H1 (cell line): ENCODE measurements at regions of chr5 and their contacts with region 1.

Region 1: GRCh38 chr5:154087257-154087656 is 48.5 kb downstream of the MFAP3 start:
- DNase-seq: no peak
- H3K4me3 ChIP-seq: no peak overlapping the region
- H3K27ac ChIP-seq: no peak overlapping the region
- H3K4me1 ChIP-seq: peaks cover 0 to 6% (median under 1%) of the 10 kb centered on the region in 4 experiments; a peak in 2 of 7 replicates
- H3K27me3 ChIP-seq: no peaks in the 10 kb centered on the region
- CTCF ChIP-seq: no peak
- EP300 ChIP-seq: no peak
- POLR2A ChIP-seq: no peak
- RAD21 ChIP-seq: no peak

Region 2: DNA sequence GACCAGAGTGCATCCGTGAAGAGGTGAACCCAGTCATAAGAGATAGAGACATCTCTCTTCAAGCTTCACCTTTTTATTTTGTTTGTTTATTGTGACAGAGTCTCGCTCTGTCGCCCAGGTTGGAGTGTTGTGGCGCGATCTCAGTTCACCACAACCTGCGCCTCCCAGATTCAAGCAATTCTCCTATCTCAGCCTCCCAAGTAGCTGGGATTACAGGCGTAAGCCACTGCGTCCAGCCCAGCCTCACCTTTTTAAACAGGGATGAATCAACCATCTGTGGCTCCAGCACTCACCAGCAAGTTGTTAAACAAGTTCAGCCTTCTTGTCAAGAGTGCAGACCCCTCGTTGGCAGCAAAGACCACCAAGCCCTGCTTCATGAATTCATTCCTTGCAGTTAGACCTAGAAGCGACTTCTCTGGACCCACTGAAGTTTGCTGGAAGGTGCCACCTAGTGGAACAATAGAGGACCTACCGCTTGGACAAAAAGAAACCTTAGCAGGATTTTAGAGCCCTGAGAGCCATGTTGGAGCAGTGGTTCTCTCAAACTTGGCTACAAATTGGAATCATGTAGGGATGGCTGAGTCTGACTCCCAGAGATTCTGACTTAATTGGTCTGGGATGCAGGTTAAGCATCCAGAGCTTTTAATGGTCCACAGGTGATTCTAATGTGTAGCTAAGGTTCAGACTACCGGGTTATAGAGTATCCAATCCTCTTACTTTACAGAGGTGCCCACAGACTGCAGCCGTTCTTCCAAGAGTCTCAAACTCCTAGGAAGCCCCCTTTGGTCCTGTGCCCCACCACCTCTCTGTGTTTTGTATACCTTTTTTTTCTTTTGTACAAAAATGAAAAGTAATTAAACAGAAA is 92.8 kb after region 1 on chr5:
- CTCF ChIA-PET with region 1: interaction called, 12 read pairs
- POLR2A ChIA-PET with region 1: no interaction called
- DNase-seq: no peak
- H3K4me3 ChIP-seq: no peak overlapping the region
- H3K27ac ChIP-seq: no peak overlapping the region
- H3K4me1 ChIP-seq: no peaks in the 10 kb centered on the region; a peak in 1 of 7 replicates
- H3K27me3 ChIP-seq: peaks cover 0 to 3% (median 0%) of the 10 kb centered on the region in 4 experiments; a peak in 1 of 7 replicates
- CTCF ChIP-seq: peak; percentile 26 to 84 (median 84)
- EP300 ChIP-seq: no peak
- POLR2A ChIP-seq: no peak
- RAD21 ChIP-seq: peak; percentile 85 to 90